WTC11 (cell line): ENCODE measurements at regions of chr3 and their contacts with region 1.

Region 1: DNA sequence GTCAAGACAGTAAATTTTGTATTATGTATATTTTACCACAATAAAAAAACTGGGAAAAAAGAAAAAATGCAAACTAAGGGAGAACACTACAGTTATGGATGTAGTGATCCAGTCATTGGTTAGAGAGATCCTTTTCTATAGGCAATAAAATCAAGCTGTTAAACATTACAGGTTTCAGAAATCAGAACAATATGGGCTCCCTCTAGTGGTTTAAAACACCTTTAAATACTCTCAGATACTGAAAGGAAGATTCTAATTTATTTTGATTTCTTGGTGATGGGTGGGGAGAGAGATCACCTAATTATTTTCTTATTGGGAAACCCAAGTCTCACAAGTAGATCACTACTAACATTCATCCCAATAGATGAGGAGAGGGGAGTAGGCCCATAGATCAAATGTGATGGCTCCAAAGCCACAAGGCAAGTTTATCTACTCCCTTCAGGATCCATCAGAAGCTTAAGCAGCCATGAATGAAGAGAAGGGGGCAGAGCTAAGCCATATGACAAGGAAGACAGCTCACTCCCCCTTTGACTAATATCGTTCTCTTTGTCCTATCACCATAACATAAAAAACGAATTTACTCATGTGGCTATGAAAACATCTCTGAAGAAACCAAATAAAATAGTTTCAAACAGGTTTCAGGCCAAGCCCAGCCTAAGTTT is 118.6 kb downstream of the ANO10 start:
- DNase-seq: no peak
- ATAC-seq: peak; percentile 60
- H3K4me3 Mint-ChIP-seq: no peak overlapping the region
- H3K27ac Mint-ChIP-seq: no peak overlapping the region
- H3K4me1 Mint-ChIP-seq: peaks cover 10% of the 10 kb centered on the region
- H3K27me3 Mint-ChIP-seq: no peaks in the 10 kb centered on the region
- CTCF ChIP-seq: peak; percentile 43; the same call in 1 of the 2 replicates

Region 2: DNA sequence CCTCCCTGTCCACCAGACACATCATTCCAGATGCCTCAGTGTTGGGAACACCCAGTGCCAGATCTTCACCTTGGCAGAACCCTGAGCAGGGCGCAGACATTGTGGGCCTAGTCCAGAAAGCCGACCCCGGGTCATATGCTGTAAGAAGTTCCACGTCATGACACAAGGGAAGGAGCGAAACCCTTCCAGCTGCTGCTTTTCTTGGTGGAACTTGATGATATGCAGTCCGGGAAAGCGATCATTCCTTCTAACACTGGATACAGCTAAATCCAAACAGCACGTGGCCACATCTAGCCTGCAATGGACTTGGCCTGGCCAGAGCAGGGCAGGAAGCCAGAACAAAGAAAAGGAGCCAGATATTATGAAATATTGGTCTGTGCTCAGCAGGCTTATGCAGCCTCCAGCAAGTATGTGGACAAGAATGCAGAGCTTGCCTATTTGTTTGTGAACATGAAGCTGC is 502.1 kb before region 1 on chr3:
- CTCF ChIA-PET with region 1: no interaction called
- POLR2A ChIA-PET with region 1: no interaction called
- DNase-seq: no peak
- ATAC-seq: no peak
- H3K4me3 Mint-ChIP-seq: no peak overlapping the region
- H3K27ac Mint-ChIP-seq: no peak overlapping the region
- H3K4me1 Mint-ChIP-seq: no peaks in the 10 kb centered on the region
- H3K27me3 Mint-ChIP-seq: no peaks in the 10 kb centered on the region; the same call in 1 of the 2 replicates
- CTCF ChIP-seq: no peak

Region 3: DNA sequence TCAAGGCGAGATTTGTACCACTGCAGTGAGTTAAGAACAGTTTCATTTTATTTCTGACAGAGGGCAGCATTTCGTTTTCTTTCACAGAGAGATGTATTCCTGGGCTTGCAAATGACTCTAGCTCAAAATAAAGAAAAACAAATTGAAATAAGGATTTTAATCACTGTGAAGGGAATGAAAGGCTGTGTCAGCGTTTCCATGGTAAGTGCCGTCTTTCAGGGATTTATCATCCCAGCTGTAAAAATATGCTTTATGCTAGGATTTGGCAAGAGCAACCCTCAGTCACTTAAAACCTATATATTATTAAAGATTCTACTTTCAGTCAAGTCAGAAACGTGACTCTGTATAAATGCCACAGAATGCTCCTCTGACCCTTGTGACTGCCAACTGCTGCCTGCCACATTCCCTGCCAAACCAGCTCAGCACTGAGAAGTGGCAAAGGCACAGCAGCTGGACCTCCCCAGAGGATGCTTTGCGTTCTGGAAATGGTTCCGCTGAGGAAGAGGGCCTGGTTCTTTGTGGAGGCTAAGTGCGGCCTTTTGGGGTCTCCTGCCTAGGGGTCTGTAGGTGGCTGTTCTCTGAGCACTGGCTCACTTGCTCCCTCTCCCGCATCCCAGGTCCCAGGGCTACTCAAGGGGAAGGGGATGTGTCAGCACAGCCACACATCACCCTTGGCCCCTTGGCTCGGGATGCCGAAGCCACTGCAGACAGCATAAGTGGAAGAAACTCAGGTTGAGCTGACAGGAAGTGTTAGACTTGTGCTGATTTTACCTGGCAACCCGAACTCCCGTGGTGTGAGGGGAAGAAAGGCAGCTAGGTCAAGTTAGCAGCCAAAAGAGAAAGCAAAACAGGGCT is 340.7 kb before region 1 on chr3:
- CTCF ChIA-PET with region 1: interaction called, 14 read pairs
- POLR2A ChIA-PET with region 1: interaction called, 3 read pairs
- DNase-seq: peak; percentile 13
- ATAC-seq: peak; percentile 42
- H3K4me3 Mint-ChIP-seq: no peak overlapping the region
- H3K27ac Mint-ChIP-seq: peak overlapping the region; percentile 70
- H3K4me1 Mint-ChIP-seq: peaks cover 21% of the 10 kb centered on the region
- H3K27me3 Mint-ChIP-seq: peaks cover 4% of the 10 kb centered on the region; the same call in 1 of the 2 replicates
- CTCF ChIP-seq: no peak

Region 4: DNA sequence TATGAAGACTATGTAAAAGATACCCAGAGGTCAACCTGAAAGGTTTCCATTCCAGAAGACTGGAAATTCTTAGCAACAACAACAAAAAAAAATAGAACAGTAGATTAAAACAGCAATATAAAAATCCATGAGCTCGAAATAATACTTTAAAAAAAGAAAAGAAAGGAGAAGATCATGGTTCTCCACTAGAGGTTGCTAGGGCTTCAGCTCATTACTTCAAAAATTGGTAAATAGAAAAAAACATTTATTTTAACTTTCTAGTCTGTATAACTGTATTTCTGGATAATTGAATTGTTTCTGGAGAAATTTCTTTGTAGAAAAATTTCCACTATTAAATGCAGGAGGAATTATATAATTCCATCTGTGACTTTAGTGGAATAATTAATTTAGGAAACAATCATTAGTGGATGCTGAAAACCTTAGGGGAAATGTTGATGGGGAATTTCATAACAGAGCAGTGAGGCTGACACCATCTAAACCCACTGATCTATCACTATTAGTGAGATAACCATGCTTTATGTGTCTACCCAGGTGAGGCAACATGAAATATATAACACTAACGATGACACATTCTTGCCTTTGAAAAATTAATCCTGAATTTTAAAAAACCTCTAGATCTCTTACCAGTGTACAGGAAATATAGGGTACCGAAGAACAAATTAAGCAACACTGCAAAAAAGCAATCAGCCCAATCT is 279.4 kb before region 1 on chr3:
- CTCF ChIA-PET with region 1: interaction called, 11 read pairs
- POLR2A ChIA-PET with region 1: no interaction called
- DNase-seq: no peak
- ATAC-seq: no peak
- H3K4me3 Mint-ChIP-seq: no peak overlapping the region
- H3K27ac Mint-ChIP-seq: no peak overlapping the region
- H3K4me1 Mint-ChIP-seq: no peaks in the 10 kb centered on the region
- H3K27me3 Mint-ChIP-seq: peaks cover 2% of the 10 kb centered on the region; the same call in 1 of the 2 replicates
- CTCF ChIP-seq: no peak